ENCODE measurements at regions of chr17 and their contacts with region 1.

Region 1: GRCh38 chr17:29078183-29079045 is 35.5 kb downstream of the PIPOX start:
- DNase-seq: no peak
- ATAC-seq: no peak
- H3K4me3 ChIP-seq: no peak overlapping the region
- H3K27ac ChIP-seq: no peak overlapping the region
- H3K4me1 ChIP-seq: peaks cover 24% of the 10 kb centered on the region
- H3K27me3 ChIP-seq: no peaks in the 10 kb centered on the region
- CTCF ChIP-seq: no peak
- EP300 ChIP-seq: no peak
- POLR2A ChIP-seq: no peak
- RAD21 ChIP-seq: no peak

Region 2: DNA sequence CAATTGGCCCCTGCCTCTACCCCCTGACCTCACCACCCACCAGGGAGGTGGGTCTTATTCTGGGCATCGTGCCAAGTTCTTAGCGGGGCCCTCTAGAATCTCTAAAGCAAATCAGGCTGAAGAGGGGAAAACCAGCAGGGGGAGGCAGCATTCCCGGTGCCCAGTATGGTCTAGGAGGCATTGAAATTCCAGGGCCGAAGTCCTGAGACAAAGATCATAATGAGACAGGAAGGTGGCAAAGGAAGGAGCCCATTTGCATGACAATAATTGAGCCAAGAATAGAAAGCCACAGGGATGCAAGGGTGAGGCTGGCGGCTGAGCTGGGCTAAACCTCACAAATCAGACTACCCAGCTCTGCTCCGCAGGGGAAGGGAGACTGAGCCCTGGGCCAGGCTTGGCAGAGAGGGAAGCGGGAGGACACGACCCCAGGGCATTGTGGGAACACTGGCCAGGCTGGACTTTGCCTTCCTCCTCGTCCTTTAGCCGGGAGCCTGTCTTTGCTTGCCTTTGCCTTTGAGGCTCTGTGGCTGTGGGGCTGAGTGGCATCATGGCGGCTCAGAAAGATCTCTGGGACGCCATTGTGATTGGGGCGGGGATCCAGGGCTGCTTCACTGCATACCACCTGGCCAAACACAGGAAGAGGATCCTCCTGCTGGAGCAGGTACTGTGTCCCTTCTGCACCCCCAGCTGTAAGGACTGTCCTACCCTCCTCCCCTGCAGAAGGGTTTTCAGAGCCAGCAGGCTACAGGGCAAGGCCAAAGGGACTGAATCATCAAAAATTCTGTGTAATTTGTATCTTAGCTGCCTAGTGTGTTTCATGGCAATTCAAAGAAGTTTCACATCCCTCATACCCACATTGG is 35.5 kb before region 1 on chr17 and contains the start of gene PIPOX:
- CTCF ChIA-PET with region 1: no interaction called
- POLR2A ChIA-PET with region 1: no interaction called
- in situ Hi-C with region 1: no loop called
- intact Hi-C with region 1: loop called (anchors 5 kb)
- DNase-seq: peak; percentile 90
- ATAC-seq: peak; percentile 87
- H3K4me3 ChIP-seq: peak within 1 kb of the TSS; percentile 63 to 78 (median 63)
- H3K27ac ChIP-seq: peak within 1 kb of the TSS; percentile 94
- H3K4me1 ChIP-seq: peaks cover 87% of the 10 kb centered on the region
- H3K27me3 ChIP-seq: peaks cover 0 to 3% of the 10 kb centered on the region in 2 experiments; a peak in 1 of 5 replicates
- CTCF ChIP-seq: peak; percentile 74
- EP300 ChIP-seq: no peak
- POLR2A ChIP-seq: peak; percentile 83 to 92
- RAD21 ChIP-seq: no peak
- total RNA-seq, gene PIPOX: 87.3 and 118 TPM in 2 replicates